Activated naive CD4-positive, alpha-beta T cell treated with anti-CD3 and anti-CD28 coated beads for 36 hours (primary cell): ENCODE measurements at regions of chr2 and their contacts with region 1.

Region 1: DNA sequence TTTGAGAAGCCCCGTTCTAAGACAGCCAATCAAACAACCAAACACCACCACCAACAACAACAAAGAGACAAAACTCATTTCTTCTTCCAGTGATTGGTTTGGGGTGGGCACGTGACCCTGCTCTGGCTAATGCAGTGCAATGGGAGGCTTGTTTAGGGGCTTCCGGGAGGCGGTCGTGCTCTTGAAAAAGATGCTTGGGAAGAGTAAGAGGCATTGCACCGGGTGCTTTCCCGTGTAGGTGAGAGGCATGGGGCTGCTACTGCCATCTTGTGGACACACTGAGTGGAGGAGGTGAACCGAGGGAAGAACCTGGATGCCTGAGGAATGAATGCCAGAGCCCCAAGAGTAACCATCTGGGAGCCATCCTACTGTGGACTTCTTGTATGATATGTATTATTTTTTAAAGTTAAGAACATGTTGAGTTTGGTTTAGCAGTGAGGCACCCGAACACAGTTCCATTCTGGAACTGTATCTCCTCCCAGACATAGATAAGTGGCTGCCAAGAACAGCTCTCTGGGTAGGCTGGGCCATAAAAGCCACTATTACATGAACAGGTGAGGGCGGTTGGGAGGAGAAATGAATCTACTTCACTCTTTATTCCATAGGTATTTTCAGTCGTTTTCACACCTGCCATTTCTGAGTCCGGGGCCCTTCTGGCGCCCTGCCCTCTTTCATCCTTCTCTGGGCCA is 19.1 kb upstream of the ARHGAP25 start:
- DNase-seq: peak; percentile 72
- H3K4me3 Mint-ChIP-seq: no peak overlapping the region
- H3K27ac Mint-ChIP-seq: peak overlapping the region; percentile 83
- H3K4me1 Mint-ChIP-seq: peaks cover 73% of the 10 kb centered on the region
- H3K27me3 Mint-ChIP-seq: no peaks in the 10 kb centered on the region

Region 2: DNA sequence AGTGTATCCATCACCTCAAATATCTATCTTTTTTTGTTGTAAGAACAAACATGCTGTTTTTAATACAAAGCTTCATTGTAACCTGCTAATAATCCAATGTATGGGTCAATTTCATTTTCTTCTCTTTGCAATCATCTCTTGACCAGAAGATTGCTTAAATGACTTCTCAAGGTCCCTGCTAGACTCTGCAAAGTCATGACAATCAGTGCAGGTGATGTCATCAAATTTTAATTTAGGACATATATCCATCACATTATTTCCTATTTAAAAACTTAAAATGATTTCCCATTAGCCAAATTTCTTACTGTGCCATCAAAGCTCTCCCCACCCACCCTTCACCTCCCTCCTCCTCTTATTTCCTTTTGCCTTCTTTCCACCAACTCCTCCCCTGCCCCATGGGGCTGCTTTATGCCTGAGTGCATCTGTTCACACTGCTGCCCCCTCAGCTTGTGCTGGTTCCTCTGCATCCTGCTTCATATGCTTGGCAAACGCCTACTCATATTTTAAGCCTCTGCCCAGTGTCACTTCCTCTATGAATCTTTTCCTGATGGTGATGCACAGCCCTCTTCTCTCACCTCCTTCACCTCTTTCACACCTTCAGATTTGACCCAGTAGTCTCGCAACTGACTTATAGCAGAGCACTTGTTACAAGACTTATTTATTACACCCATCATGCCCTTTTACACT is 330.1 kb before region 1 on chr2:
- CTCF ChIA-PET with region 1: no interaction called
- intact Hi-C with region 1: loop called (anchors 1 kb)
- DNase-seq: peak; percentile 72
- H3K4me3 Mint-ChIP-seq: no peak overlapping the region
- H3K27ac Mint-ChIP-seq: peak overlapping the region; percentile 9
- H3K4me1 Mint-ChIP-seq: peaks cover 40% of the 10 kb centered on the region
- H3K27me3 Mint-ChIP-seq: peaks cover 5% of the 10 kb centered on the region

Region 3: GRCh38 chr2:68653538-68653982 is 61.9 kb before region 1 on chr2:
- CTCF ChIA-PET with region 1: interaction called, 6 read pairs
- intact Hi-C with region 1: loop called (anchors 1 kb)
- DNase-seq: peak; percentile 78
- H3K4me3 Mint-ChIP-seq: peak overlapping the region; percentile 0
- H3K27ac Mint-ChIP-seq: peak overlapping the region; percentile 63
- H3K4me1 Mint-ChIP-seq: peaks cover 43% of the 10 kb centered on the region
- H3K27me3 Mint-ChIP-seq: peaks cover 18% of the 10 kb centered on the region

Region 4: GRCh38 chr2:68689553-68690537 is 25.7 kb before region 1 on chr2:
- CTCF ChIA-PET with region 1: interaction called, 8 read pairs
- intact Hi-C with region 1: loop called (anchors 1 kb)
- DNase-seq: peak; percentile 31
- H3K4me3 Mint-ChIP-seq: no peak overlapping the region
- H3K27ac Mint-ChIP-seq: peak overlapping the region; percentile 52
- H3K4me1 Mint-ChIP-seq: peaks cover 21% of the 10 kb centered on the region
- H3K27me3 Mint-ChIP-seq: no peaks in the 10 kb centered on the region

Region 5: DNA sequence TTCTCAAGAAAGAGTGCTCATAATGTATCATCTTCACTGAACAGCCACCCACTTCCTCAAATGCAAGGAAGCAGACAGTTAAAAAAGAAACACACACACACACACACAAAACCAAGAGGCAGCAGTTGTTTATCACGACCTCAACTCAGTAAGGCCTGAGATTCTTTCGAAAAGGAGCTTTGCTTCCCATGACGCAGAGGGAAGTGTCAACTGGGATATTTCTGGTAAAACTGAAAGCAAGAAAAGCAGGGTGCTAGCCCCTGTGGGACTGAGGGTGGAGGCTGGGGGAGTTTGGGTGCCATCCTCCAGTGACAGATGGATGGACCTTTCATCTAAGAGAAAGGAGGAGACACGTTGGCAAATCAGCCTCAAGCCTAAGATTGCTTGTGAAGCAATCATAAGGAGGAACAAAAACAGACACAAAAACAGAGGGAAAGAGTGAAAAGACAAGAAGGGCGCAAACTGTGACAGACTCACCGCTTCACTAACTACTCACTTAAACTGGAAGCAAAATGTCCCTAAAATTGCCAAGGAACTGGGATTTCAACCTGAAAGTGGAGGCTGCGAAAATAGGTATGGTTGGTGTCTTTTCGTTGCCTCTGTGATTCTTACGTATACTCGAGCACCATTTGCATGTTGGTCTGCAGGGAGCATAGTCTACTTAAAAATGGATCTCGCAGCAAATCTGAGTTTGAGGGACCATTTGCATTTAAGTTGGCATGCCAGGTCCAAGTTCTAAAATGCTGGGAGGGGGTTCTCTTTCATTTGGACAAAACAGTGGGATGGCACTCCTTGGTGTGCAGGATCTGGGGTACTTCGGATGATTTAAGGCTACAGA is 19.4 kb after region 1 on chr2 and contains the start of gene ARHGAP25:
- CTCF ChIA-PET with region 1: interaction called, 32 read pairs
- intact Hi-C with region 1: loop called (anchors 1 kb)
- DNase-seq: peak; percentile 88
- H3K4me3 Mint-ChIP-seq: no peak within 1 kb of the TSS
- H3K27ac Mint-ChIP-seq: no peak within 1 kb of the TSS
- H3K4me1 Mint-ChIP-seq: peaks cover 33% of the 10 kb centered on the region
- H3K27me3 Mint-ChIP-seq: no peaks in the 10 kb centered on the region
- total RNA-seq, gene ARHGAP25: 43.0 to 46.7 TPM

Region 6: DNA sequence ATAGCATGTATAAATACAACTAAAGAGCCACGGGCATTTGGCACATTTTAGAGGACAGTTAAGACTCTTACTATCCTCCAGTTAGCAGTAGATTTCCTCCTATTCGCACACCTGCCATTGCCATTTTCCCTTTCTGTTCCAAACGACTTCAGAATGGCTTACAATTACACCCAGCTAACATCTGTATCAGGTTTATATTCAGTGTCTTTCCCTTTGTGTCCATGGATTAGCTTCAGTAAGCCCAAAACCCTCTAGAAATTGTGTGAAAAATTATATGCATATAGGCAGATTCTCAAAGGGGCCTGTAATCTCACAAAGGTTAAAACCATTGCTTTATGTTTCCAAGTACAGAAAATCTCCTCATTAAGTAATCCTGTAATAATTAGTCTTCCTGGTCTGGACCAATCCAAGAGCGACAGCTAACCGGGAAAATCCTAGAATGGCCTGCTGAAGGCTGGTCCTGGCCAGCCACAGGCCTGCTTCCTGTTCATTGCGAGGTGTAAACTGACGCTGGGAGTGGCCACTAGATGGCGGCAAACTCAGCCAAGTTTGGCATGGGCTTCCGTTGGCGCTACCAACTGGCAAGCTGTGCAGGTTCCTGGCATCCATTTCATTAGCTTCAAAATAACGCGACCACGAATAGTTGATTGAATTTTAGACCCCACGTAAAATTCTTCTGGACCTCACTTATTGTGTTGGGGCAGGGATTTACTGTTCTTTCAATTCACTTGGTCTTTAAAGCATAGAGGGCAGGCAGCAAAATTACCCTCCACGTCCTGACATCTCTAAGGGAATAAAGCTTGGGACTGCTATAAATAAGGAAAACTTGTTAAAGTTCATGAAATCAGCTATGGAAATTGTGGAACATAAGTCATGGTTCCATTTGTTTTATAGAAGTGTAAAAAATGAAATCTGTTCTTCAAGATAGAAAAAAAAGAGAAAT is 36.2 kb after region 1 on chr2:
- CTCF ChIA-PET with region 1: interaction called, 43 read pairs
- intact Hi-C with region 1: no loop called
- DNase-seq: peak; percentile 98
- H3K4me3 Mint-ChIP-seq: peak overlapping the region; percentile 28
- H3K27ac Mint-ChIP-seq: peak overlapping the region; percentile 93
- H3K4me1 Mint-ChIP-seq: peaks cover 87% of the 10 kb centered on the region
- H3K27me3 Mint-ChIP-seq: no peaks in the 10 kb centered on the region

Region 7: DNA sequence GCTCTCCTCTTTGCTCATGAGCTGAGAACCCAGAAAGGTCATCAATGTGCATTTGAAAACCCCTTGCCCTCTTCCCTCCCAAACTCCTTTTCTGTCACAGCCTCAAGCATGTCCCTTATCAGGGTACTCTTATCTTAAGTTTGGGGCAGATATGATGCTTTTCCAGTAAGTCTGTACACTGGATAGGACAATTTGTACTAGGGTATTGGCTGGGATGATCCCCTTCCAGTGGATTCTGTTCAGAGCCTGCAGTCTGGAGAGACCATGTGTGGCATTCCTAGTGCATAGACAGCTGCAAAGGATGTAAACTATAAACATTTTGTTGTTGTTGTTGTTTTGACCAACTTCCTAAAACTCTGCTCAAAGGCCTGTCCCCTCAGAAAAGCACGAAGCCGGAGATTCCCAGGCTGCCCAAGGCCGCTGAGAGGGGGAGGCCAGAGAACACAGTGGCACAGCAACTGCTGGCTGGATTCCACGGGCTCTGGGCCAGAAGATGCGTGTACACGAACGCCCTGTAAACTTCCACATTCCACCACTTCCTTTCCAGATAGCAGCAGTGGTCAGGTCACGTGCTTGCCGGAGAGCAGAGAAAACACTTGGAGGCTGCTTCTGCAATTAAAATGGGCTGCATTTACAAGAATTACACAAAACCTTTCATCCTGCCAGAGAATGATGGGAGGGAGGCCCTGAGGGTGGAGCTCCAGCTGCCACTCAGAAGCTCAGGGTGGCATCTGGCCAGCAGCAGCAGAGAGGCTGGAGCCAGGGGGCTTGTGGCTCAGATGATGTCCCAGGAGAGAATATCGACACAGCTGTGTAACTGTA is 113.6 kb after region 1 on chr2:
- CTCF ChIA-PET with region 1: interaction called, 3 read pairs
- intact Hi-C with region 1: loop called (anchors 1 kb)
- DNase-seq: peak; percentile 85
- H3K4me3 Mint-ChIP-seq: peak overlapping the region; percentile 22
- H3K27ac Mint-ChIP-seq: peak overlapping the region; percentile 77
- H3K4me1 Mint-ChIP-seq: peaks cover 60% of the 10 kb centered on the region
- H3K27me3 Mint-ChIP-seq: no peaks in the 10 kb centered on the region